Activated naive CD4-positive, alpha-beta T cell treated with anti-CD3 and anti-CD28 coated beads for 36 hours (primary cell): ENCODE measurements at regions of chr3 and their contacts with region 1.

Region 1: DNA sequence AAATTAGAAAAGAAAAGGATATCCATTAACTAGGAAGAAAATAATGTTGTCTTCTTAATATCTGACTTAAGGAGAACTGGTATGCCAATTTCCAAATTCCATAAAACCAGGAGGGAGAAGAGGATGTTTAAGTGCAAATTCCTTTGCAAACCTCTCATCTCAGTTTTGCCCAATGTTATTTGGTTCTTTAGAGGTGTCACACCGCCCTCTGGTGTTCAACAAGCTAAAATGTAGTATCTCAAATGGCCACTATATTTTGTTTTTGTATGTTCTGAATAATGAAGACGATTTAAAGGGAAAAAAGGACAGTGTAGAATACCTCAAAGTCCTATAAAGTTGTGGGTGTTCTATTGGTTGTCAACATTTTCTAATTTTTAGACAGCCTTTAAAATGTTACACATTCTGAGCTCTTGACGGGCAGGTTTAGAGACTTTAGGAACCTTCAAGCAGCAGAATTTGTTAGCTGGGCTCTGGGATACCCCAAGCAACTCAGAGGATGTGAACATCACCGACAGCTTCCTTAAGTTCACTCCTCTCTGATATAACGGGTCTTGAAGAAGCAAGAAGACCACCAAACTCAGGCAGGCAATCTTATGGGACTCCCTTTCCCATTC is 458.3 kb downstream of the MFSD1 start:
- DNase-seq: peak; percentile 52
- H3K4me3 Mint-ChIP-seq: no peak overlapping the region
- H3K27ac Mint-ChIP-seq: no peak overlapping the region
- H3K4me1 Mint-ChIP-seq: no peaks in the 10 kb centered on the region
- H3K27me3 Mint-ChIP-seq: peaks cover 16% of the 10 kb centered on the region

Region 2: DNA sequence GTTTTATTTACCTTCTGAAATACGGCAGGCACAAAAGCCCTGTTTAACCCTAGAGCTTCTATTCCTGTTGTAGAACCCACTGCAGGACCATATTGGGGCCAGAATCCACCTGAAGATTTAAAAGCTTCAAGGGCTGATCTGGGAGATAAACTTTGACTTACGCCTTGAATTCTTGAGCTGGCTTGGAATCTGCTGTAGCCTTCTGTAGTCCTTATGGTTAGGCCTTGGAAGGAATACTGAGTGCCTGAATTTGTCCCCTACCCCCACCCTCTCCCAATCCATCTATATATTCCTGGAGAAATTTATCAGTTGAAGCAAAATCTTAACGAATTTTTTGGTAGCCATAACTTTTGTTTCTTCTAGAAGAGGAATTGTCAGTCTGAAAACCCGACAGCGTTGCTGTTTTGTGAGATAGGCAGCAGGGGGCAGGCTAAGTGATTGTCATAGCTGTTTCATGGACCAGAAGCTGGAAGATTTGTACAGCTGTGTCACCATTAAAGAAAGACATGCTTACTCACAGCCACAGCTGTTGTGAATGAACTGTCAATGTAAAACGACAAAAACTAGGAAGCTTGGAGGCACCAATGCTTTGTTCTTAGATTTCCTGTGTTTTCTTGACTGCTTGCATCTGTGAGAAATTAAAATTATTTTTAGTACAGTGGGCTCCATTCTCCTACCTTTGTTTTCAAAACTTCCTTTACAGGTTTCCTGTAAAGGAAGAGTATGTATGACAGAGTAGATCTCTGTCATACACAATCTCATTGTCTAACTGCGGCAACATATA is 600.5 kb before region 1 on chr3:
- CTCF ChIA-PET with region 1: no interaction called
- intact Hi-C with region 1: loop called (anchors 2 kb)
- DNase-seq: peak; percentile 74
- H3K4me3 Mint-ChIP-seq: no peak overlapping the region
- H3K27ac Mint-ChIP-seq: no peak overlapping the region
- H3K4me1 Mint-ChIP-seq: peaks cover 6% of the 10 kb centered on the region
- H3K27me3 Mint-ChIP-seq: no peaks in the 10 kb centered on the region

Region 3: DNA sequence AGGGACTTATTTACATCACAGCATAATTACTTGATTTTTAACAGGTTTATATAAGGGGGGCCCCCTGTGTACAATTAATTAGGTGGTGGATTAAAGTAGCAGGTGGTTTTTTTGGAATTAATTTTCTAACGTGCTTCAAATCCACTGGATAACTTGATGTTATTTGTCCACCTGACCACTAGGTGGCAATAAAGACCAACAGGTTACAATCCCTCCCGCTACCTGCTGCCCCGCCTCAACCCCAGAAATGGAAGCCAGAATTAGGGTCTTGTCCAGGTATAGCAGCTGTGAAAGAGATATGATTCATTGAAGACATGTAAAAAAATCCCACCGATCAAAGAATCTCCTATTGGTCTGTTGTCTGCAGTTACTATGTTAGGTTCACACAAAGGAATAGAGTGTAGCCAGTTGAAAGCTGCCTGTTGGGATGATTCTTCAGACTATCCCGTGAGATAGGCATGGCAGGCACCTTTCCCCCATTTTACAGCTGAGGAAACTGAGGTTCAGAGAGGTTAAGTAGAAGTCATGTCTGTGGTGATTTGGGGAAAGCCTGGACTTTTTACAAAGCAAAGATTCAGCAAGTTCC is 414.3 kb before region 1 on chr3:
- CTCF ChIA-PET with region 1: interaction called, 92 read pairs
- intact Hi-C with region 1: loop called (anchors 1 kb)
- DNase-seq: peak; percentile 40
- H3K4me3 Mint-ChIP-seq: no peak overlapping the region
- H3K27ac Mint-ChIP-seq: no peak overlapping the region
- H3K4me1 Mint-ChIP-seq: peaks cover 15% of the 10 kb centered on the region
- H3K27me3 Mint-ChIP-seq: no peaks in the 10 kb centered on the region

Region 4: DNA sequence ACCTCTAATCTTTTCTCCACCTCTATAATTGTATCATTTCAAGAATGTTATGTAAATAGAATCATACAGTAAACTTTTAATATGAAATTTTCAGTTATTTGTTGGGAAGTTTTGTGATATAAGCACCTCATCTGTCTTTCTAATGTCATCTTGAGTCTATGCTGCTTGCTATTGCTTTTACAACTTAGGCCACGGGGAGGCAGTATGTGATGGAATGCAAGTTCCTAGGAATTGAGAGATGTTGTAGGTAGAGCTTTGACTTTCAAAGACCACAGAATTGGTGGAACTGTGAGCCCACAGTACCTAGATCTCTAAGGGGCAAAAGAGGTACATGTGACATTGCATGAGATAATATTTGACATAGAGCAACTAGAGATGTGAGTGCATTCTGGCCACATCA is 130.0 kb before region 1 on chr3:
- CTCF ChIA-PET with region 1: no interaction called
- intact Hi-C with region 1: loop called (anchors 5 kb)
- DNase-seq: no peak
- H3K4me3 Mint-ChIP-seq: no peak overlapping the region
- H3K27ac Mint-ChIP-seq: no peak overlapping the region
- H3K4me1 Mint-ChIP-seq: no peaks in the 10 kb centered on the region
- H3K27me3 Mint-ChIP-seq: no peaks in the 10 kb centered on the region

Region 5: GRCh38 chr3:159293493-159293892 is 33.3 kb after region 1 on chr3:
- CTCF ChIA-PET with region 1: no interaction called
- intact Hi-C with region 1: no loop called
- DNase-seq: no peak
- H3K4me3 Mint-ChIP-seq: no peak overlapping the region
- H3K27ac Mint-ChIP-seq: no peak overlapping the region
- H3K4me1 Mint-ChIP-seq: no peaks in the 10 kb centered on the region
- H3K27me3 Mint-ChIP-seq: peaks cover 6% of the 10 kb centered on the region

Region 6: GRCh38 chr3:159322322-159322939 is 62.3 kb after region 1 on chr3:
- CTCF ChIA-PET with region 1: no interaction called
- intact Hi-C with region 1: no loop called
- DNase-seq: peak; percentile 9
- H3K4me3 Mint-ChIP-seq: no peak overlapping the region
- H3K27ac Mint-ChIP-seq: no peak overlapping the region
- H3K4me1 Mint-ChIP-seq: no peaks in the 10 kb centered on the region
- H3K27me3 Mint-ChIP-seq: no peaks in the 10 kb centered on the region

Region 7: DNA sequence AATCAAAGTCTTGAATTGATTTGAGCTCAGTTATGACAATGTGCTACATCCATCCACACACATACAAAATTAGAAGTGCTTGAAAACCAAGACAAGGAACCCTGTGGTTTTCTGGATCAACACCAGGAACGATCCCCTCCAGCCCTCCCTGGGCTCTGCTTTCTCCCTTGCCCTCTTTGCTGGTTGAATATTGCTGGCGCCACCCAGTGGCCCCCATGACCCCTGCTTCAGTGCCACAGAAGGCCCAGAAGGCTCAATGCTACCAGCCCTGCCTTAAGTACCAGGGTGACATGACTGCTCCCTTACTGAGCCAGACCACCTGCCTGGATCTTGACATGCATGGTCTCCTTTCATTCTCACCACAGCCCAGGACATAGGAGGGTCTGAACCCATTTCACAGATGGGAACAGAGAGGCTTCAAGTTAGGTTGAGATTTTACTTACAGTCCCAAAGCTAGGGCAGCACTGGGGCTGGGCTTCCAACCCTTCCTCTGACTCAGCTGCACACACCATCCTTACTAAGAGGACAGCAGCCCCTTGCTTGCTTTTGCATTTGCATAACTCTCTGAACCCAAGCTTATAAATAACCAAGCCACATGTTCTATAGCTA is 743.5 kb after region 1 on chr3:
- CTCF ChIA-PET with region 1: interaction called, 5 read pairs
- intact Hi-C with region 1: loop called (anchors 2 kb)
- DNase-seq: peak; percentile 62
- H3K4me3 Mint-ChIP-seq: no peak overlapping the region
- H3K27ac Mint-ChIP-seq: no peak overlapping the region
- H3K4me1 Mint-ChIP-seq: no peaks in the 10 kb centered on the region
- H3K27me3 Mint-ChIP-seq: no peaks in the 10 kb centered on the region